Naive thymus-derived CD4-positive, alpha-beta T cell (primary cell): ENCODE measurements at regions of chr6 and their contacts with region 1.

Region 1: DNA sequence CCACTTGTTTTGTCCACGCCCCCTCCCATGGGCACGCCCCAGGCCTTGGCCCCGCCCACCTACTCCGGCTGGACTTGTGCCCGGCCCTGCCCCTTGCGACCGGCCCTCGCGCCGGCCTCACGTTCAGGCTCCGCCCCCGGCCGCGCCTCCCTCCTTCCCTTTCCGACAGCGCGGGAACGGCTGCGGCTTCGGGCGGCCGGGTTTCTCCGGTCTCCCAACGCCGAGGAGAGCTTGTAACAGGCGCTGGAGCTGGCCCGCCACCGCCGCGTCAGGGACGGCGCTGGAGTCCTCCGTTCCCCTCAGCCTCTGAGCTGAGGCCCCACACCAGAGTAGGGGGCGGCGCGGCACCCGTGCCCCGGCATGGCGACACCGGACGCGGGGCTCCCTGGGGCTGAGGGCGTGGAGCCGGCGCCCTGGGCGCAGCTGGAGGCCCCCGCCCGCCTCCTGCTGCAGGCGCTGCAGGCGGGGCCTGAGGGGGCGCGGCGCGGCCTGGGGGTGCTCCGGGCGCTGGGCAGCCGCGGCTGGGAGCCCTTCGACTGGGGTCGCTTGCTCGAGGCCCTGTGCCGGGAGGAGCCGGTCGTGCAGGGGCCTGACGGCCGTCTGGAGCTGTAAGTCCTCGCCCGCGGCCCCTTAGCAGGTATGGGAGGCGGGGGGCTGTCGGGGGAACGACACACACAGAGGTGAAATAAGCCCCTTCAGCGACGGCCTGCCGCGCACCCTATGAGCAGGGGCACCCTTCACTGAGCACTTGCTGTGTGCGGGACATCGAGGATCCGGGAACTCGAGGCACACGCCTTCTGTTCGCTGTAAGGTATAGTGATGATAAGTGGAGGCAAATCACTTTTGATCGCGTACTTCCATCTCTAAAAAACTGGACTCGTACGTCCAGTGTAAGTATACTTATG is at the start of gene FANCE:
- DNase-seq: peak; percentile 62 to 99 (median 68)
- ATAC-seq: peak; percentile 94
- H3K4me3 ChIP-seq: peak within 1 kb of the TSS; percentile 63
- H3K4me3 Mint-ChIP-seq: peak within 1 kb of the TSS; percentile 74 to 91 (median 86)
- H3K27ac ChIP-seq: peak within 1 kb of the TSS; percentile 70
- H3K27ac Mint-ChIP-seq: peak within 1 kb of the TSS; percentile 53 to 92 (median 79)
- H3K4me1 ChIP-seq: peaks cover 8 to 11% of the 10 kb centered on the region in 2 donors
- H3K4me1 Mint-ChIP-seq: peaks cover 9 to 49% (median 42%) of the 10 kb centered on the region in 7 donors
- H3K27me3 ChIP-seq: no peaks in the 10 kb centered on the region
- H3K27me3 Mint-ChIP-seq: peaks cover 0 to 14% (median 0%) of the 10 kb centered on the region in 5 donors
- total RNA-seq, gene FANCE: 3.1 to 12.0 (median 6.4) TPM

Region 2: DNA sequence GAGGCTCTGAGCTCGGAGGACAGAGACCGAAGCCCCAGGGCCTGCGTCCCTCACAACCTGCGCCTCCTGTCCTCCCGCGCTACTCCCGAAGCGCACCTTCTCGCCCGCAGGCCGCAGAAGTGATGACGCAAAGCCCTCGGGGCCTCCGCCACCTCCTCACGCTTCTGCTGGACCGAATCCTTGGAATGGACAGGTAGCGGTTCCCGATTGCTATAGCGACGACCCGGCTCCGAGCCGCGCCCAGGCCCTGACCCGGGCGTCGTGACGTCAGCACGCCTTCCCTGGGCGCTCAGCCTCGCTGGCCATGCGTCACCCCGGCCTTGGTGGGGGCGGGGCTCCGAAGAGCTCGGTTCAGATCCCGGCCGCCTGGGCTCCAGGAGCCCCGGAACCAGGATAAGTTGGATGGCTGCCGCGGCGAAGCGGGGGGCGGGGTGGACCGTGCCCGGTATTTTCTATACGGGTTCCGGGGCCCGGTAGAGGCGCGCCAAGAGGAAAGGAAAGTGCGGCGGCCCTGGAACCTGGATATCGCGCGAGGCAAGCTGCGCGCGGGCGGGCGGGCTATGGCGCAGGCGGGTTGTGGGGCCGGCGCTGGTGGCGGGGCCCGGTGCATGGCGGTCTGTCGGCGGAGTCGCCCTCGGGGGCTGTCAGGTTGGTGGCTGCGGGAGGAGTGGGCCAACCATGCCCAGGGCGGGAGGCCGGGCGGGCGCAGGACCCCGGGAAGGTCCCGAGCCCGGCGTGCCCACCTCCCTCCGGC is 193.1 kb before region 1 on chr6 and contains the start of gene ZNF76:
- CTCF ChIA-PET with region 1: no interaction called
- POLR2A ChIA-PET with region 1: interaction called, 5 read pairs
- intact Hi-C with region 1: loop called in 1 of 2 experiments (anchors 1 kb)
- DNase-seq: peak; percentile 89 to 93 (median 92)
- ATAC-seq: peak; percentile 88
- H3K4me3 ChIP-seq: peak within 1 kb of the TSS; percentile 65
- H3K4me3 Mint-ChIP-seq: peak within 1 kb of the TSS; percentile 85 to 99 (median 97)
- H3K27ac ChIP-seq: peak within 1 kb of the TSS; percentile 95
- H3K27ac Mint-ChIP-seq: peak within 1 kb of the TSS; percentile 89 to 99 (median 97)
- H3K4me1 ChIP-seq: peaks cover 15 to 17% of the 10 kb centered on the region in 2 donors
- H3K4me1 Mint-ChIP-seq: peaks cover 37 to 64% (median 50%) of the 10 kb centered on the region in 7 donors
- H3K27me3 ChIP-seq: no peaks in the 10 kb centered on the region
- H3K27me3 Mint-ChIP-seq: no peaks in the 10 kb centered on the region
- total RNA-seq, gene ZNF76: 44.4 to 110 (median 77.2) TPM

Region 3: GRCh38 chr6:35327349-35328027 is 125.0 kb before region 1 on chr6:
- CTCF ChIA-PET with region 1: interaction called, 27 read pairs
- POLR2A ChIA-PET with region 1: interaction called, 8 read pairs
- intact Hi-C with region 1: loop called in 1 of 2 experiments (anchors 1 kb)
- DNase-seq: peak in 8 of 9 donors; percentile 64 to 81 (median 76)
- ATAC-seq: peak; percentile 86
- H3K4me3 ChIP-seq: no peak overlapping the region
- H3K4me3 Mint-ChIP-seq: peak overlapping the region in 9 of 10 donors; percentile 1 to 70 (median 36)
- H3K27ac ChIP-seq: peak overlapping the region; percentile 34
- H3K27ac Mint-ChIP-seq: peak overlapping the region; percentile 65 to 96 (median 86)
- H3K4me1 ChIP-seq: peaks cover 11 to 16% of the 10 kb centered on the region in 2 donors
- H3K4me1 Mint-ChIP-seq: peaks cover 15 to 29% (median 23%) of the 10 kb centered on the region in 7 donors
- H3K27me3 ChIP-seq: no peaks in the 10 kb centered on the region
- H3K27me3 Mint-ChIP-seq: no peaks in the 10 kb centered on the region

Region 4: DNA sequence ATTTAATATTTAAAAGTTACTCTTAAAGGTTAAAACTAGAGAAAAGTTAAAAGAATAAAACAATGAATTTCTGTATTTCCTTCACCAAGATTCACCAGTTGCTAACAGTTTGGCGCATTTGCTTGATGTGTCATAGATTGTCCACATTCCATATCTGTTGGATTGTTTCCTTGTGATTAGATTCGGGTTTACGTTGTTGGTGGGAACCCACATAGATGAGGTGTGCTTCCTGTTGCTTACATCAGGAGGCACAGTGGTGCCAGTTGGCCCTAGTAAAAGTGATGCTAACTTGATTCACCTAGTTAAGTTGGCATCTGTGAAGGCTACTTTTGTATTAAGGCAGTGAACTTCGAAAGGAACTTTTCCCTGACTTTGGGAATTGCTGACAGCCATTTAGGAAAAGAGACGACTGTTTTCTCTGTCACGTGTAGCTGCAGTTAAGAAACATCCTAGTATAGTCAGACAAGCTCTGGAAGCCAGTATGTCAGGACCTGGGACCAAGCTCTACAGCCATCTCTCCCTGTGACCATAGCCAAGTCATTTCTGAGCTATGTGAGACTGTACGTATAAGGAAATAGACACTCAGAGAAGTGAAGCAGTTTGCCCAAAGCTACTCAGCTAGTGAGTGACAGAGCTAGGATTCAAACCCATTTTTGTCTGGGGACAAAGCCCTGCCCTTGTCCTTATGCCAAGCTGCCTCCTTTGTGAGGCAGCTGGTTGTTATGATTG is 61.0 kb before region 1 on chr6:
- CTCF ChIA-PET with region 1: no interaction called
- POLR2A ChIA-PET with region 1: no interaction called
- intact Hi-C with region 1: loop called in 1 of 2 experiments (anchors 10 kb)
- DNase-seq: no peak
- ATAC-seq: peak; percentile 67
- H3K4me3 ChIP-seq: no peak overlapping the region
- H3K4me3 Mint-ChIP-seq: peak overlapping the region in 4 of 10 donors; percentile 14 to 52 (median 30)
- H3K27ac ChIP-seq: no peak overlapping the region
- H3K27ac Mint-ChIP-seq: peak overlapping the region in 8 of 9 donors; percentile 42 to 86 (median 70)
- H3K4me1 ChIP-seq: peaks cover 13 to 17% of the 10 kb centered on the region in 2 donors
- H3K4me1 Mint-ChIP-seq: peaks cover 33 to 76% (median 68%) of the 10 kb centered on the region in 7 donors
- H3K27me3 ChIP-seq: no peaks in the 10 kb centered on the region
- H3K27me3 Mint-ChIP-seq: no peaks in the 10 kb centered on the region

Region 5: DNA sequence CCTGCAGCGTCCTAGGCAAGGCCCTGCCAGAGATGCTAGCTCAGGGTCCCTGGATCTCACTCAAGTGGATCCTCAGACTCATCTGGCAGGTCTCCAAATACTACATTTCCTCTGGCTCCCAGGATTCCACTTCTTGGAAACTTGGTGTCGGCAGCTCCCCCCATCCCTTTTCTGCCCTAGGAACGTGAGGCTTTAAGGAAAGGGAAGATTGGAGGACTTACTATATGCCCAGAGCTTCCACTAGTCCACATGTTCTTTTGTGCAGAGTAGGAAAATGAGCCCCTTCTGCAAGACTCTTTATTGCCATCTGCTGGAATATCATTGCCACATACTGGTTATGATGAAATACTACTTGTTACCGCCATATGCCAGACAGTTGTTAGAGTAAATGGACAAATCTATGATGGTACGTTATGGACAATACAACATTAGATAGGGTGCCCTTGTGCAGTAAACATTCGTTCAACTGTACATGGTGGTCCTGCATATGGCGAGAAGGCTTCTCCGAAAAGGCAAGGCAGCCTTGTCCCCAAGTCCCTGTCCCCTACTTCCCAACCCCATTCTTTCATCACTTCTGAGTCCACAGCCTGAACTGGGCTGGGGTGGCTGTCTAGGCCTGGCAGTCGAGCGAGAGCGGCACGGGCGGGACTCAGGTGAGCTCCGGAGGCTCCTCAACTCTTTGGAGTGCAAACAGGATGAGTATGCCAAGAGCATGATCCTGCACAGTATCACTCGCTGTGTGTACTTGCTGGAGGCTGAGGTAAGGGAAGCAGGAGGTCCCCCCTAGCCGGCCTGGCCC is 285.2 kb after region 1 on chr6:
- CTCF ChIA-PET with region 1: interaction called, 4 read pairs
- POLR2A ChIA-PET with region 1: interaction called, 3 read pairs
- intact Hi-C with region 1: loop called in 1 of 2 experiments (anchors 1 kb)
- DNase-seq: peak in 7 of 9 donors; percentile 60 to 80 (median 73)
- ATAC-seq: peak; percentile 83
- H3K4me3 ChIP-seq: no peak overlapping the region
- H3K4me3 Mint-ChIP-seq: peak overlapping the region in 8 of 10 donors; percentile 51 to 75 (median 62)
- H3K27ac ChIP-seq: peak overlapping the region; percentile 22
- H3K27ac Mint-ChIP-seq: peak overlapping the region; percentile 28 to 98 (median 90)
- H3K4me1 ChIP-seq: peaks cover 31 to 51% of the 10 kb centered on the region in 2 donors
- H3K4me1 Mint-ChIP-seq: peaks cover 21 to 50% (median 42%) of the 10 kb centered on the region in 7 donors
- H3K27me3 ChIP-seq: no peaks in the 10 kb centered on the region
- H3K27me3 Mint-ChIP-seq: no peaks in the 10 kb centered on the region